ENCODE measurements at regions of chr4 and their contacts with region 1.

Region 1: GRCh38 chr4:163681208-163681821 is 186.8 kb downstream of the TMA16 start:
- DNase-seq: no peak

Region 2: DNA sequence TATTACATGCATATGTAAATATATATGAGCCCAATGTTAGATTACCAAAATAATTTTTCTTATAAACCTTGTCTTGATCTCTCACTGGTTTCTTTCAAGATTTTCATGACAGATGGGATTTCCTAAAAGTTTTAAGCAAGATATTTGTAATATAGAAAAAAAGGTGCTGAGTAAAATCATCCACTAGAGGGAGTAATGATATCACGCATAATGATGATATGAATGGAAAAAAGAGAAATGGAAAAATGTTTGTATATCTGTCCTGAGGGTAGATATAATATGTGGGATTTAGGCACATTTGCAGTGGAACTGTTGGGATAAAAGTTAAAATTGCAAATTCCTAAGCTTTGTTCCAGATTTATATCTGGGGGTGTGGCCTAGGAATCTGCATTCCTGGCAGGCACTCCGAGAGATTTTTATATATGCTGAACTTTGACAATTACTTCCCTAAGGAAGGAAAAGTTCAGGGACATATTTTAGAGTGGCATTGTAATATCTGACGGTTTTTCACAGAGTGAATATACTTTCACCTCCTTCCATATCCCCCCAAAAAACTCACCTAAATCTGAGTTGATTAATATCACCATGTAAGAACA is 126.3 kb before region 1 on chr4:
- intact Hi-C with region 1: loop called (anchors 5 kb)
- DNase-seq: no peak

Region 3: GRCh38 chr4:163744861-163745260 is 63.5 kb after region 1 on chr4:
- intact Hi-C with region 1: no loop called
- DNase-seq: no peak

Measured in cardiac septum (tissue), 1 donor.